Ovary (tissue), 10 donors: ENCODE measurements at regions of chr9 and their contacts with region 1.

Region 1: DNA sequence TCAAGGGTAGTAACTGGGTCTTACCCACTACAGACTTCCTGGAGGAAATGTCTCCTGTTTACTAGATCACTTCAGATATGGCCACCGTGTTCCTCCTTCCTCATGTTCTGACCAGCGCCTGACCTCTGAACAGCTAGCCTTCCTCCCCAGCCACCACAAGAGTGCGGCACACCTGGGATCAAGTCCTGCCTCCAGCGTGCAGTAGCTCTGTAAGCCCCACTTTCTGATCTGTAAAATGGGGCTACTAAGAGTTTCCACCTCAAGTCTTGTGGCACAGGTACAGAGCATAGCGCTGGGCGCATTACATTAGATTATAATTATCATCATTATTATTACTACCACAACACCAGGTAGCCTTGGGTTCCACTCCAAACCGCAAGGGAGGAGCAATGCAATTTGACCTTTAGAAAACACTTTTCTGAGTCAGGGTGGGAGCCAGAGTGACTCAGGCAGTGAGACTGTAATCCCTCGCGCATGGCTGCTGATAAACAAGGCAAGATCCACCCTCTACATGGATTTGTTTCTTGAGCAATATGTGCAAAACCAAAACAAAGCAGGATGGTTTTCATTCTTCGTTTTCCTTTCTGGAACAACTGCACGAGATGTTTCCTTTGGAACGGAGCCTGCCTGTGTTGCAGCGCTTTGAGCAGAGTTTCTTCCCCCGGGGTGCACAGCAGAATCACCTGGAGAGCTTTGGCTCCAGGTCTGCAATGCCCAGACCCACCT is 65.0 kb upstream of the ANGPTL2 start:
- DNase-seq: peak; percentile 73 to 91 (median 82)
- H3K4me3 ChIP-seq: no peak overlapping the region
- H3K27ac ChIP-seq: peak overlapping the region; percentile 82 to 91
- H3K4me1 ChIP-seq: peaks cover 19% of the 10 kb centered on the region
- H3K27me3 ChIP-seq: no peaks in the 10 kb centered on the region
- CTCF ChIP-seq: no peak
- EP300 ChIP-seq: no peak
- POLR2A ChIP-seq: no peak

Region 2: GRCh38 chr9:126927419-126927818 is 260.0 kb before region 1 on chr9:
- intact Hi-C with region 1: no loop called
- DNase-seq: no peak
- H3K4me3 ChIP-seq: no peak overlapping the region
- H3K27ac ChIP-seq: no peak overlapping the region
- H3K4me1 ChIP-seq: no peaks in the 10 kb centered on the region
- H3K27me3 ChIP-seq: no peaks in the 10 kb centered on the region
- CTCF ChIP-seq: no peak
- EP300 ChIP-seq: no peak
- POLR2A ChIP-seq: no peak

Region 3: GRCh38 chr9:127122176-127123063 is 65.0 kb before region 1 on chr9 and contains the start of gene ANGPTL2:
- intact Hi-C with region 1: loop called in 2 of 4 experiments (anchors 5 to 10 kb)
- DNase-seq: peak; percentile 95 to 97 (median 96)
- H3K4me3 ChIP-seq: peak within 1 kb of the TSS; percentile 52
- H3K27ac ChIP-seq: peak within 1 kb of the TSS; percentile 61 to 88
- H3K4me1 ChIP-seq: peaks cover 17% of the 10 kb centered on the region
- H3K27me3 ChIP-seq: no peaks in the 10 kb centered on the region
- CTCF ChIP-seq: peak in 1 of 3 donors; percentile 27
- EP300 ChIP-seq: peak; percentile 44
- POLR2A ChIP-seq: peak; percentile 85
- total RNA-seq, gene ANGPTL2: 9.8 to 108 (median 64.1) TPM

Region 4: GRCh38 chr9:127136081-127136879 is 51.1 kb before region 1 on chr9:
- intact Hi-C with region 1: loop called in 1 of 4 experiments (anchors 5 kb)
- DNase-seq: peak; percentile 8 to 33 (median 26)
- H3K4me3 ChIP-seq: no peak overlapping the region
- H3K27ac ChIP-seq: no peak overlapping the region
- H3K4me1 ChIP-seq: peaks cover 14% of the 10 kb centered on the region
- H3K27me3 ChIP-seq: no peaks in the 10 kb centered on the region
- CTCF ChIP-seq: no peak
- EP300 ChIP-seq: no peak
- POLR2A ChIP-seq: no peak